ENCODE measurements at regions of chr10 and their contacts with region 1.

Region 1: GRCh38 chr10:18157881-18158280 is 17.7 kb downstream of the CACNB2 start:
- DNase-seq: no peak
- H3K4me3 ChIP-seq: no peak overlapping the region
- H3K27ac ChIP-seq: peak overlapping the region; percentile 76 to 79 (median 79)
- H3K4me1 ChIP-seq: peaks cover 6 to 68% (median 53%) of the 10 kb centered on the region in 4 donors
- H3K27me3 ChIP-seq: no peaks in the 10 kb centered on the region
- CTCF ChIP-seq: no peak
- EP300 ChIP-seq: no peak
- POLR2A ChIP-seq: no peak

Region 2: DNA sequence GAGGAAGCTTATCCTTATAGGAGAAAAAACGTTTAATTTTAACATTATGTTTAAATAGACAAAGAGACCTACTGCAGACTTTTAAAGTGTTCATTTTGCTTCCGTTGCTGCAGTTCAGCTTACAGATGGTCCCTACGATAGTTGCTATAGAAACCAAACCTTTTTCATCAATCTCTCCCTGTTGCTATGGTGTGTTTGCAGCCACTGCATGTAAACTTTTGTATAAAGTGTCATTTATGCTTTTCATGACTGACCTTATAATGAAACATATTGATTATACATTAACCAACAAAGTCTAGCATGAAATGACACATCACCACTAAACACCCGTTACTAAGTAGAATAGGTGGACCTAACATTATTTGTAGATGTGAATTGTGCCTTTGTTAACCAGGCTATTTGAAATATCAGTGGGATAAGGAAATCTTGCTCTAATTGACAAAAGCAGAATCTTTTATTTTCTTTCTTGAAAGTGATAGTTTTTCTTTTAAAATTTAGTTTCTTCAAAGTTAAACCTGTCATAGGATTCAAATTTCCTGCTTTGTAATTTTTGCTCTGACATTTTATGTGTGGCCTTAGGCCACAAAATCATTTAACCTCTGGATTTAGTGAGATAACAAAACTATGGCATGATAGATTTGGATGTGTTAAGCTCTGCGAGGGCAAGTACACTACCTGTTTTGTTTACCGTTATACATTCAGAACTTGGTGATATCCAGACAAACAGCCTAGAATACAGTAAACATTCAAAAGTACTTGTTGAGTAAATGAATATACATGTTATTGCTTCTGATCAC is 46.4 kb after region 1 on chr10:
- intact Hi-C with region 1: loop called (anchors 5 kb)
- DNase-seq: no peak
- H3K4me3 ChIP-seq: peak overlapping the region in 2 of 4 donors; percentile 28 to 31
- H3K27ac ChIP-seq: peak overlapping the region; percentile 76 to 84 (median 80)
- H3K4me1 ChIP-seq: peaks cover 7 to 64% (median 60%) of the 10 kb centered on the region in 4 donors
- H3K27me3 ChIP-seq: no peaks in the 10 kb centered on the region
- CTCF ChIP-seq: no peak
- EP300 ChIP-seq: no peak
- POLR2A ChIP-seq: no peak

Measured in esophagus muscularis mucosa (tissue), 4 donors.